CD8-positive, alpha-beta memory T cell (primary cell): ENCODE measurements at regions of chr17 and their contacts with region 1.

Region 1: GRCh38 chr17:39980351-39981206 is at the start of gene PSMD3:
- DNase-seq: peak; percentile 95 to 99 (median 99)
- H3K4me3 ChIP-seq: peak within 1 kb of the TSS; percentile 86
- H3K4me3 Mint-ChIP-seq: peak within 1 kb of the TSS; percentile 89 to 96 (median 95)
- H3K27ac ChIP-seq: peak within 1 kb of the TSS; percentile 85
- H3K27ac Mint-ChIP-seq: peak within 1 kb of the TSS; percentile 90 to 98 (median 95)
- H3K4me1 ChIP-seq: peaks cover 28% of the 10 kb centered on the region
- H3K4me1 Mint-ChIP-seq: peaks cover 36 to 51% (median 49%) of the 10 kb centered on the region in 3 donors
- H3K27me3 ChIP-seq: no peaks in the 10 kb centered on the region
- H3K27me3 Mint-ChIP-seq: peaks cover 5 to 8% of the 10 kb centered on the region in 2 donors
- total RNA-seq, gene PSMD3: 185 to 186 TPM

Region 2: DNA sequence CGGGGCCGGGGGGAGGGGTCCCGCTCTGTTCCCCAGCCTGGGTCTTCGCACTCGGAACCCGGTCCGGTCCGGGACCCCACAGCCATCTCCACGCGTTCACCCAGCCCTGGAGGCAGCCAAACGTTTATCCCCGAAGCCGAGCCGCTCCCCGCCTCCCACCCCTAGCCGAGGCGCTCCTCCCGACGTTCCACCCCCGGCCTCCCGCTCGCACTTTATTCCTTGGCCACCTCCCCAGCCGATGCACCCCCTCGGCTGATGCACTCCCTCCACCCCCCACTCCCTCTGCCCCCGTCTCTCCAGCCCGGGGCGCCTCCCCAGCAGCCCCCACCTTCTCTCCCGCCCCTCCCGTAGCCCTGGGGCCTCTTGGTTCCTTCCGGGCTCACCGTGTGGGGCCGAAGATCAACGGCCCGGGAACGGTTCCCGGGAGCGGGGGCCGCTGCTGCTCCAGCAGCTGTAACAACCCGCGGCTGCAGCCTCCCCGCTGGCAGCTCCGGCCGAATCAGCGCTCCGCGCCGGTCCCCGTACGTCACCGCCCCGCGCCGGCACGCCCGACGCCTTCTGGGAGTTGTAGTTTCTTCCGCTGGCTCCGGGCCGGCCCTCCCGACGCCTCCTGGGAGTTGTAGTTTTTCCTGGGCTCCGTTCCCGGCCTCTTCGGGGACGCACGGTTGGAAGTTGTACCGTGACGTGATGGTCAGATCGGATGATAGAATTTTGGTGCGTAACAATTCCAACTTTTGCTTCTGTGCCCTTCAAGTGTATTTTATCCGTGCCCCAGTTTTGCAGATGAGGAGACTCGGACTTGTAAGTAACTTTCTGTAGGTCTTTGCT is 53.3 kb before region 1 on chr17 and contains the starts of genes LRRC3C and ORMDL3:
- CTCF ChIA-PET with region 1: interaction called, 4 read pairs
- POLR2A ChIA-PET with region 1: interaction called, 13 read pairs
- DNase-seq: peak; percentile 83 to 92 (median 89)
- H3K4me3 ChIP-seq: peak within 1 kb of the TSS; percentile 71
- H3K4me3 Mint-ChIP-seq: peak within 1 kb of the TSS; percentile 85 to 96 (median 92)
- H3K27ac ChIP-seq: peak within 1 kb of the TSS; percentile 57
- H3K27ac Mint-ChIP-seq: peak within 1 kb of the TSS; percentile 91 to 98 (median 94)
- H3K4me1 ChIP-seq: peaks cover 46% of the 10 kb centered on the region
- H3K4me1 Mint-ChIP-seq: peaks cover 41 to 56% (median 46%) of the 10 kb centered on the region in 3 donors
- H3K27me3 ChIP-seq: no peaks in the 10 kb centered on the region
- H3K27me3 Mint-ChIP-seq: no peaks in the 10 kb centered on the region
- total RNA-seq, gene LRRC3C: not detected
- total RNA-seq, gene ORMDL3: 73.6 to 76.4 TPM

Region 3: GRCh38 chr17:39952680-39953470 is 27.7 kb before region 1 on chr17:
- CTCF ChIA-PET with region 1: interaction called, 54 read pairs
- POLR2A ChIA-PET with region 1: interaction called, 17 read pairs
- DNase-seq: peak; percentile 85 to 99 (median 95)
- H3K4me3 ChIP-seq: peak overlapping the region; percentile 74
- H3K4me3 Mint-ChIP-seq: peak overlapping the region; percentile 75 to 95 (median 86)
- H3K27ac ChIP-seq: peak overlapping the region; percentile 53
- H3K27ac Mint-ChIP-seq: peak overlapping the region; percentile 55 to 89 (median 80)
- H3K4me1 ChIP-seq: peaks cover 12% of the 10 kb centered on the region
- H3K4me1 Mint-ChIP-seq: peaks cover 8 to 19% (median 10%) of the 10 kb centered on the region in 3 donors
- H3K27me3 ChIP-seq: no peaks in the 10 kb centered on the region
- H3K27me3 Mint-ChIP-seq: no peaks in the 10 kb centered on the region

Region 4: GRCh38 chr17:39962642-39963220 is 17.8 kb before region 1 on chr17 and contains the start of gene GSDMA:
- CTCF ChIA-PET with region 1: interaction called, 54 read pairs
- POLR2A ChIA-PET with region 1: interaction called, 7 read pairs
- DNase-seq: no peak
- H3K4me3 ChIP-seq: no peak within 1 kb of the TSS
- H3K4me3 Mint-ChIP-seq: peak within 1 kb of the TSS in 4 of 7 donors; percentile 8 to 61 (median 41)
- H3K27ac ChIP-seq: no peak within 1 kb of the TSS
- H3K27ac Mint-ChIP-seq: peak within 1 kb of the TSS in 7 of 8 donors; percentile 0 to 89 (median 48)
- H3K4me1 ChIP-seq: peaks cover 27% of the 10 kb centered on the region
- H3K4me1 Mint-ChIP-seq: peaks cover 18 to 47% (median 37%) of the 10 kb centered on the region in 3 donors
- H3K27me3 ChIP-seq: no peaks in the 10 kb centered on the region
- H3K27me3 Mint-ChIP-seq: peaks cover 2 to 12% of the 10 kb centered on the region in 2 donors
- total RNA-seq, gene GSDMA: not detected

Region 5: DNA sequence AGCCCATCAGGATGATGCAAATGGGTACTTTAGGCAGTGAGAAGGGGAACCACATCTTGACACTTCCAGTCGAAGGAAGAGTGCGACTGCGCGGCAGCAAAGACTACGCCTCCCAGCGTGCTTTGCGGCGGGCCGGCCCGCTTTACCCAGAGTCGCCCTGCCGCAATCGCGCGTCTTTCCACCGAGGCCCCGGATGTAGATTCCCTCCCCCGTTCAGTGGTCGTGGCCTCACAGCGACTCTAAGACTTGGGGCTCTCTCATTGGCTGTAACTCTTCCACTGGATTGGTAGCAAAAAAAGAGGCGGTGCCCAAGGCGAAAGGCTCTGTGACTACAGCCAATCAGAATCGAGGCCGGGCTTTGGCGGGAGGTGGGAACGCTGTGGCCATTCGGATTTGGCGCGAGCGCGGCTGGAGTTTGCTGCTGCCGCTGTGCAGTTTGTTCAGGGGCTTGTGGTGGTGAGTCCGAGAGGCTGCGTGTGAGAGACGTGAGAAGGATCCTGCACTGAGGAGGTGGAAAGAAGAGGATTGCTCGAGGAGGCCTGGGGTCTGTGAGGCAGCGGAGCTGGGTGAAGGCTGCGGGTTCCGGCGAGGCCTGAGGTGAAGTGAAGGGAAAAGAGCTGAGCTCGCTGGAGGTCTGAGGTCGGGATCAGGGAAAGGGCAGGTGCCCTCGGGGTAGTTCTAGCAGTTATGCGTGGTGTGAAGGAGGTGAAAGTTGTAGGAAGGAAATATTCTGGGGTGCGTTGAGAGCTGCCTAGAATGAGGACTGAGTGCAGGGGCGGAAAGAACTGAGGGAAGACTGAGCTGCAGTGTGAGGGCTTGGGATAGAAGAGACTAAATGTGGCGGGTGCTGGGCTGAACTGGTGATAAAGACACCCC is 307.2 kb after region 1 on chr17 and contains the start of gene CDC6:
- CTCF ChIA-PET with region 1: no interaction called
- POLR2A ChIA-PET with region 1: no interaction called
- DNase-seq: peak; percentile 97 to 99 (median 98)
- H3K4me3 ChIP-seq: peak within 1 kb of the TSS; percentile 93
- H3K4me3 Mint-ChIP-seq: peak within 1 kb of the TSS; percentile 89 to 99 (median 97)
- H3K27ac ChIP-seq: peak within 1 kb of the TSS; percentile 64
- H3K27ac Mint-ChIP-seq: peak within 1 kb of the TSS; percentile 61 to 97 (median 90)
- H3K4me1 ChIP-seq: peaks cover 11% of the 10 kb centered on the region
- H3K4me1 Mint-ChIP-seq: peaks cover 21 to 35% (median 35%) of the 10 kb centered on the region in 3 donors
- H3K27me3 ChIP-seq: no peaks in the 10 kb centered on the region
- H3K27me3 Mint-ChIP-seq: no peaks in the 10 kb centered on the region
- total RNA-seq, gene CDC6: 107 to 110 TPM

Region 6: DNA sequence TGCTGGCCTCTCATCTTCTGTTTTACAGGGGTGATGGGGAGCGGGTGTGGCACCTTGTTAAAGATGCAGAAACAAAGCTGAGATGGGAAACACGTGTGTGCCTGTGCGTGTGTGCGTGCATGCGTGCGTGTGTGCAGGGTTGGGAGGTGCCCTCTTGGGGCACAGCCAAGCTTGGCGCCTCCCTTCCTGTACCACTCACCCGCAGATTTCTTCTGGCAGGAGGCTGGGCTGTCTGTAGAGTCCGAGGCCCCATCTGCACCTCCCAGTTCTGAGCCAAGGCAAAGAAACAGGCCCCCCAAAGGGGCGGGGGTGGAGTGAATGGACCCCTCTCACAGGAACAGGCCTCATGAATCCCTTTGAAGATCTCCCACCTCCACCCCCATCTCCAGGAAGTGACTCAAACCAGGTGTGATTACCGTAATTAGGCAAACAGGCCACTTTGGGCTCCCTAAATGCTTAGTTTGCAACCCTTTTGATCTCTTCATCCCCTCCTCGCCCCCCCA is 500.0 kb after region 1 on chr17:
- CTCF ChIA-PET with region 1: no interaction called
- POLR2A ChIA-PET with region 1: no interaction called
- DNase-seq: peak; percentile 76 to 96 (median 91)
- H3K4me3 ChIP-seq: no peak overlapping the region
- H3K4me3 Mint-ChIP-seq: peak overlapping the region; percentile 45 to 85 (median 62)
- H3K27ac ChIP-seq: peak overlapping the region; percentile 67
- H3K27ac Mint-ChIP-seq: peak overlapping the region; percentile 89 to 100 (median 99)
- H3K4me1 ChIP-seq: peaks cover 61% of the 10 kb centered on the region
- H3K4me1 Mint-ChIP-seq: peaks cover 64 to 86% (median 82%) of the 10 kb centered on the region in 3 donors
- H3K27me3 ChIP-seq: no peaks in the 10 kb centered on the region
- H3K27me3 Mint-ChIP-seq: peaks cover 0 to 1% of the 10 kb centered on the region in 2 donors